Calu3 (cell line): ENCODE measurements at regions of chr1 and their contacts with region 1.

Region 1: DNA sequence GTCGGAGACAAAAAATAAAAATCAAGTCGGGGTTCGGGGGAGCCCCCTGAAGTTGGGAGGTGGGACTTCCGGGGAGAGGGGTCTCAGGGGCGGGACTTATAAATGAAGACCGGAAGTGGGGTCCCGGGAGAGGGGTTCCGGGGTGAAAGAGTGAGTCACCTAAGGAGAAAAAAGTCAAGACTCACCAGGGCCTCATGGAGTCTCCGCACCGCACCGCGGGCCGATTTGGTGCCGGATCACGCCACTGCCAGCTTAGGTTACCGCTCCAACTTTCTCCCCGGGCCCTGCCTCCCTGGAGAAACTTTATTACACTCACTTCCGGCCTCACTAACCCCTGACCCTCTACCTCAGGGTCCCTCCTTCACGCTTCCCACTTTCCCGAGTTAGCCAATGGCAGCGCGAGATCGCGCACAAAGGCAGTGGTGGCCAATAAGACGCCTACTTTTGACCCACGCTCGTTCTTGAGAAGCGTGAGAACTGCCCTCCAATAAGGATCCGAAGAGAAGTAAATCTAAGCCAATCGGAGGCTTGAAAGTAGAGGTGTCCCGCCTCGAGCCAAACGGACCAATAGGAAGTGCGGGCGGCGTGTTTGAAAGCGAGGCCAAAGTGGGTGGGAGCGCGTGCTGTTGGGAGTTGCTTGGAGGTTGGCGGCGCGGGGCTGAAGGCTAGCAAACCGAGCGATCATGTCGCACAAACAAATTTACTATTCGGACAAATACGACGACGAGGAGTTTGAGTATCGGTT is at the start of gene CKS1B:
- DNase-seq: peak; percentile 96
- H3K4me3 Mint-ChIP-seq: no peak within 1 kb of the TSS
- H3K27ac Mint-ChIP-seq: no peak within 1 kb of the TSS
- H3K4me1 Mint-ChIP-seq: peaks cover 33% of the 10 kb centered on the region
- H3K27me3 Mint-ChIP-seq: no peaks in the 10 kb centered on the region
- CTCF ChIP-seq: no peak
- total RNA-seq, gene CKS1B: 182 and 230 TPM in 2 replicates

Region 2: DNA sequence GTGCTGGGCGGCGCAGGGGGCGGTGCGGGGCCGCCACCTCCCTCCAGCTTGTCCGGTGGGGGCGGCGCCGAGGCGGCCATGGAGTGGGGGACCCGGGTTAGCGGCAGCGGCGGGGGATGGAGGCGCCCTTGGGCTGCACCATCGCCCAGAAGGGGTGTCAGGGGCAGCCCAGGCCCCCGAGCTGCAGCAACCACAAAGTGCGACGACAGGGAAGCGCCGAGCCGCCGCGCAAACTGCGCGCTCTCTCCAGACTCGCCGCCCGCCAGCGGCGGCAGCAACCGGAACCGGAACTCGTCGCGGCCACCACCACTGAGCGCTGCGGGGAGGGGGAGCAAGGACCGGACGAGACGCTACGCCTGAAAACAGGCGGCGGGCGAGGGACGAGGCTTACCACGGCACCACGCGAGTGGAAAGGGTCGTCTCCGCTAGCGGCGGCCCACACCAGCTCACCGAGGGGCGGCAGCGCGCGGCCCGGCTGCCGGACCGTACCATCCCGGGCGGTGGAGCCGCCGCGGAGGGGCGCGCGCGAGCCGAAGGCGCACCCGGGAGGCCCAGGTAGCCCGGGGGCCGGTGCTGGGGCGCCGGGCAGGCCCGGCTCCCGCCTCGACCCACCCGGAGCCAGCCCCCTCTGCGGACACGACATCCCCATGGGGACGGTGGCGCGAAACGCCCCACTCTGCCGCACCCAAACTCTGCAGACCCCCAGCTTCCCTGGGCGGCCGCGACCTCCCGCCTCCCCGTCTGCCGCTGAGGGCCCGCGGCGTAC is 12.6 kb before region 1 on chr1 and contains the start of gene PYGO2:
- CTCF ChIA-PET with region 1: interaction called, 12 read pairs
- intact Hi-C with region 1: no loop called
- DNase-seq: peak; percentile 91
- H3K4me3 Mint-ChIP-seq: peak within 1 kb of the TSS; percentile 85
- H3K27ac Mint-ChIP-seq: peak within 1 kb of the TSS; percentile 92
- H3K4me1 Mint-ChIP-seq: peaks cover 43% of the 10 kb centered on the region
- H3K27me3 Mint-ChIP-seq: no peaks in the 10 kb centered on the region
- CTCF ChIP-seq: peak; percentile 84
- total RNA-seq, gene PYGO2: 43.6 and 45.6 TPM in 2 replicates

Region 3: DNA sequence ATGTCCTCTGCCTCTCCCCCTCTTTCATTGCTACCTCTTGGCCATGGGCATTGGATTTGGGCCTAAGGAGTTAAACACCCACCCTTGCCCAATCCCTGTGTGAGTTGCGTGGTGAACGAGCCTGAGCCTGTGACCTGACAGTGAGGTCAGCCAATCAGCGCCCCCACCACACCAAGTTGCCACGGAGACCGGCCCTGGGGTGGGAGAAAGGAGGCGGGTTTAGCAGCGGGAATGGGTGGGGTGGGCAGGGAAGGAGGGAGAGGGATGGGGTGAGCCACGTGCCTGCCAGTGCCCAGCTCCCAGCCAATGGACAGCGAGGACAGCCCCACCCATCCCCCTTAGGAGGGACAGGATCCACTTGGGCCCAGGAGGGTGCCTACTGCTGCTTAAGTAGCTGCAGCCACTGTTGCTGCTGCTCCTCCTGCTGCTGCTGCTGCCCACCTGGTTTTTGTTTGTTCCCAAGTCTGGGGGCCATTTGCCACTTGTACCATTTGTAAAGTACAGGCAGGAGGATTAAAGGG is 37.9 kb after region 1 on chr1:
- CTCF ChIA-PET with region 1: interaction called, 14 read pairs
- intact Hi-C with region 1: no loop called
- DNase-seq: no peak
- H3K4me3 Mint-ChIP-seq: no peak overlapping the region
- H3K27ac Mint-ChIP-seq: no peak overlapping the region
- H3K4me1 Mint-ChIP-seq: peaks cover 14% of the 10 kb centered on the region
- H3K27me3 Mint-ChIP-seq: no peaks in the 10 kb centered on the region
- CTCF ChIP-seq: no peak

Region 4: DNA sequence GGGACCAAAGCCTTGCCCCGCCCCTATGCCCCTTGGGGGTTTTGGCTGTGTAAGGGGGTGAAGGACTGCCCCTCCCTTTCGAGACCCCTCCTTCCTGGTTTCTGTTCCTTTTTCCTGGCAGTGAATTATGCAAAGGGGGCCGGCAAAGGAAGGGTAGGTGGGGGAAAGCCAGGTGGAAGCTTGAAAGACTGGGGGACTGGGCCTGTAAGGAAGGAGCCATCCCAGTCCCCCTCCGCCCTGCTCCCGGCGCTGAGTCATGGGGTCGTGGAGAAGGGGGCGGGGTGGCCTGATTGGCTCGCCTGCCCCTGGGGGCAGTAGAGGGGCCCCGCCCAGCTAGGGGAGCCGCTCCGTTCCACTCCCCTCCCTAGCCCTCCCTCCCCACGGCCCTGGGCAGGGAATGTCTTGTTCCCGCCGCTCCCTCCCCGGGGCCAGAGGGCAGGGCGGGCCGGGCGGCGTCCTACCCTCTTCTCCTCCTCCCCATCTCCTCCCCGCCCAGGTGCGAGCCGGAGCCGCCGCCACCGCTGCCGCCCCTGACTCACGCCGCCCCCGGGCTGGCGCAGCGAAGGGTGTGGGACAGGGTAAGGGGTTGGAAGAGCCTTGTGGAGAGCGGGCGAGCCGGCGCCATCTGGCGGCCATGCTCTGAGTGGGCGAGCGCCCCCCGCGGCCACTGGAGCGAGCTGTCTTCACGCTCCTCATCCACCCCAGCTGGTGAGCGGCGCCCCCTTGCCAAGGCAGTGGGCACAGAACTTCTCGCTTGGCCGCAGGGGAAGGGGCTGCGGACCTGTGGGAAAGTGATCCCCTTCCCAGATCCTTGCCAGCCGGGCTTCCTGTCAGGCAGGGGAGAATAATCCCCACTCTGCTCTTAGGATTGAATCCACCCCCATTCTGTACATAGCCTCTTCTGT is 43.1 kb after region 1 on chr1:
- CTCF ChIA-PET with region 1: interaction called, 14 read pairs
- intact Hi-C with region 1: no loop called
- DNase-seq: peak; percentile 96
- H3K4me3 Mint-ChIP-seq: peak overlapping the region; percentile 60
- H3K27ac Mint-ChIP-seq: peak overlapping the region; percentile 79
- H3K4me1 Mint-ChIP-seq: peaks cover 37% of the 10 kb centered on the region
- H3K27me3 Mint-ChIP-seq: no peaks in the 10 kb centered on the region
- CTCF ChIP-seq: peak; percentile 99

Region 5: DNA sequence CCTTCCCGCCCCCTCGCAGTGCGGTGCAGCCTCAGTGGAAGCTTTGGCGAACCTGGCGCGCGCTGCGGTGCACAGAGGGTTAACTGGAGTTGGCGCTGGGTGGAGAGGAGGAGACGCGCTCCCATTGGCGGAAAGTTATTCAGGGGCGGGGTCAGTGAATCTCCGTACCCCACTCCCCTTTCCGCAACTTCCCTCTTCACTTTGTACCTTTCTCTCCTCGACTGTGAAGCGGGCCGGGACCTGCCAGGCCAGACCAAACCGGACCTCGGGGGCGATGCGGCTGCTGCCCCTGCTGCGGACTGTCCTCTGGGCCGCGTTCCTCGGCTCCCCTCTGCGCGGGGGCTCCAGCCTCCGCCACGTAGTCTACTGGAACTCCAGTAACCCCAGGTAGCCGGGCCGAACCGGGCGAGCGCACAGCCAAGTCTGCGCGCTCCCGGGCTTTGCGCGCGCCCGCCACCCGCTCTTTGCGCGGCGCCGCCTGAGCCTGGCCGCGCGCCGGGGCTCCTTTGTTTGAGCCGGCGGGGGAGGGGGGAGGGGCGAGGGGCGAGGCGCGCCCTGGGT is 89.4 kb after region 1 on chr1 and contains the start of gene EFNA4:
- CTCF ChIA-PET with region 1: interaction called, 5 read pairs
- intact Hi-C with region 1: loop called (anchors 5 kb)
- DNase-seq: peak; percentile 90
- H3K4me3 Mint-ChIP-seq: peak within 1 kb of the TSS; percentile 76
- H3K27ac Mint-ChIP-seq: peak within 1 kb of the TSS; percentile 89
- H3K4me1 Mint-ChIP-seq: peaks cover 30% of the 10 kb centered on the region
- H3K27me3 Mint-ChIP-seq: no peaks in the 10 kb centered on the region
- CTCF ChIP-seq: no peak
- total RNA-seq, gene EFNA4: 12.6 and 13.9 TPM in 2 replicates